Esophagus squamous epithelium (tissue), 5 donors: ENCODE measurements at regions of chr2 and their contacts with region 1.

Region 1: DNA sequence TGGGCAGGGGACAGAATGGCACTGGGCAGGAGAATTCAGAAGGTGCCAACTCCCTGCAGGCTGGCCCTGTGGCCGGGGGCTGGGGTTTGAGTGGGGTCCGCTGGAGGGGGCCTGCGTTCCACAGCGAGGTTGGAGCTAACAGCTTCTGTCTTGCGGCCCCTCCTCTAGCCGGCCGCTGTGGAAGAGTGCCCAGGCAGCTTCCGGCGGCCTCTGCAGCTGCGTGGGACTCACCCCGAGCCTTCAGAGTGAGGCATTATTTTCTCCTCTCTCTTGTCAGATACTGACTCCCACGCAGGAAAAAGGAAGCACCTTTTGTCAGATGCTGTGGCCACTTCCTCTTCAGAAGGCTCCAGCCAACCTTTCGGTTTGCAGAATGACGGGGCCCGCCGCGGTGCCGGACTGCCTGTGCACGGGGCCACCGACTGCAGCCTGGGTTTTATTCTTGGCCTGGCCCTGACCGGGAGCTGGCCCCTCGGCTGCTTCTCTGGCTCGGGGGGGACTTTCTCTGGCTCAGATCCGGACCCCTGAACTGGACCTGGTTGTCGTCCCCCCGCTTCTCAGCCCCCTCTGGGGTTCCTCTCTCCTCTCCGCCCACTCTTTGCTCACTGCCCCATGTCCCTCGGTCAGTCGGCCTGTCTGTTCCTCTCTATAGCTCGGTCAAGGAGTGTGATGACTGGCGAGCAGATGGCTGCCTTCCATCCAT is 40.1 kb downstream of the ARHGAP25 start:
- DNase-seq: peak; percentile 22
- H3K4me3 ChIP-seq: peak overlapping the region; percentile 8 to 60 (median 40)
- H3K27ac ChIP-seq: peak overlapping the region; percentile 68 to 91 (median 78)
- H3K4me1 ChIP-seq: peaks cover 5 to 51% (median 14%) of the 10 kb centered on the region in 3 donors
- H3K27me3 ChIP-seq: no peaks in the 10 kb centered on the region
- CTCF ChIP-seq: no peak
- POLR2A ChIP-seq: peak in 2 of 4 donors; percentile 43 to 77

Region 2: GRCh38 chr2:68832233-68832869 is 57.6 kb after region 1 on chr2:
- intact Hi-C with region 1: loop called (anchors 10 kb)
- DNase-seq: no peak
- H3K4me3 ChIP-seq: peak overlapping the region in 1 of 4 donors; percentile 5
- H3K27ac ChIP-seq: peak overlapping the region; percentile 67 to 92 (median 82)
- H3K4me1 ChIP-seq: peaks cover 21 to 54% (median 39%) of the 10 kb centered on the region in 3 donors
- H3K27me3 ChIP-seq: no peaks in the 10 kb centered on the region
- CTCF ChIP-seq: no peak
- POLR2A ChIP-seq: peak in 1 of 4 donors; percentile 35